AG04449 (cell line): ENCODE measurements at regions of chr18 and their contacts with region 1.

Region 1: GRCh38 chr18:56869189-56869777 is 218.1 kb downstream of the WDR7 start:
- DNase-seq: no peak
- H3K4me3 ChIP-seq: no peak overlapping the region
- CTCF ChIP-seq: peak; percentile 58

Region 2: GRCh38 chr18:56884511-56884910 is 15.2 kb after region 1 on chr18:
- CTCF ChIA-PET with region 1: interaction called, 13 read pairs
- POLR2A ChIA-PET with region 1: no interaction called
- DNase-seq: no peak
- H3K4me3 ChIP-seq: no peak overlapping the region
- CTCF ChIP-seq: no peak

Region 3: GRCh38 chr18:56889601-56890000 is 20.3 kb after region 1 on chr18:
- CTCF ChIA-PET with region 1: interaction called, 13 read pairs
- POLR2A ChIA-PET with region 1: no interaction called
- DNase-seq: no peak
- H3K4me3 ChIP-seq: no peak overlapping the region
- CTCF ChIP-seq: no peak

Region 4: DNA sequence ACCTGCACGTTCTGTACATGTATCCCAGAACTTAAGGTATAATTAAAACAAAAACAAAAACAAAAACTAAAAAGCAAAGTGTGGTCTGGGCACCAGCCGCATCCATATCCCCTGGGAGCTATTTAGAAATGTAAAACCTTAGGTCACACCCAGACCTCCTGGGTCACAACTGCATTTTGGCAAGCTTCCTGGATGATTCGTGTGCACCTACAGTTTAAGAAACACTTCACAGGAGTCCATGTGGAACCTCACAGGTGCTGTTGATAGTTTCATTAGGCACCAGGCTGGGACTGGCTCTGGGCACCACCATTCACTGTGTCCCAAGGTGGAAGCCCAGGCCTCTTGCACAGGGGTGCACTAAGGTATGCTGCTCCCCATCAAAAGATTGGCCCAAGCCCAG is 174.0 kb after region 1 on chr18:
- CTCF ChIA-PET with region 1: no interaction called
- POLR2A ChIA-PET with region 1: no interaction called
- DNase-seq: no peak
- H3K4me3 ChIP-seq: no peak overlapping the region
- CTCF ChIP-seq: no peak